PC-3 (cell line): ENCODE measurements at regions of chr2 and their contacts with region 1.

Region 1: GRCh38 chr2:81545626-81546025 is 1241.1 kb upstream of the LRRTM1 start:
- DNase-seq: peak; percentile 68
- ATAC-seq: peak; percentile 81
- H3K4me3 ChIP-seq: no peak overlapping the region
- H3K27ac ChIP-seq: peak overlapping the region; percentile 55
- H3K4me1 ChIP-seq: peaks cover 29% of the 10 kb centered on the region
- H3K27me3 ChIP-seq: no peaks in the 10 kb centered on the region
- CTCF ChIP-seq: no peak

Region 2: GRCh38 chr2:81658227-81658626 is 112.6 kb after region 1 on chr2:
- CTCF ChIA-PET with region 1: no interaction called
- POLR2A ChIA-PET with region 1: no interaction called
- intact Hi-C with region 1: loop called (anchors 5 kb)
- DNase-seq: peak; percentile 98
- ATAC-seq: peak; percentile 92
- H3K4me3 ChIP-seq: no peak overlapping the region
- H3K27ac ChIP-seq: peak overlapping the region; percentile 92
- H3K4me1 ChIP-seq: peaks cover 19% of the 10 kb centered on the region
- H3K27me3 ChIP-seq: no peaks in the 10 kb centered on the region
- CTCF ChIP-seq: no peak